ENCODE measurements at regions of chr6 and their contacts with region 1.

Region 1: GRCh38 chr6:27753668-27754407 is 158.4 kb downstream of the OR2B2 start:
- H3K4me3 ChIP-seq: peak overlapping the region; percentile 54
- H3K27ac ChIP-seq: no peak overlapping the region
- H3K4me1 ChIP-seq: no peaks in the 10 kb centered on the region
- CTCF ChIP-seq: no peak

Region 2: DNA sequence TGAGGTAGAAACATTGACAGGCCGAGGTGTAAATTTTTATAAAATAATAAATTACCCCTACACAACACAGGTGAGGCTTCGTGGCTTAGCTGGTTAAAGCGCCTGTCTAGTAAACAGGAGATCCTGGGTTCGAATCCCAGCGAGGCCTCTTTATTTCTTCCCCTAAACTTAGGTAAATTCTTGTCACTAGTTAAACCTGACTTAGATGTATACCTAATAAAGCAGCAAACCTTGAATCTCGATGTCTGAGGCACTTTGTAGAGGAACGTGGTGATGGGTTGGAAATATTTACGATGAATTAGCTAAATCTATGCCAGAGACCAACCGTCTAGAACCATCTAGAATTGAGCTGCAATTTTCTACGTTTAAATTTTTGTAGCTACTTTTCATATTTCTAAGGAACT is 27.2 kb before region 1 on chr6:
- CTCF ChIA-PET with region 1: interaction called, 10 read pairs
- POLR2A ChIA-PET with region 1: no interaction called
- H3K4me3 ChIP-seq: no peak overlapping the region
- H3K27ac ChIP-seq: no peak overlapping the region
- H3K4me1 ChIP-seq: no peaks in the 10 kb centered on the region
- CTCF ChIP-seq: no peak

Region 3: DNA sequence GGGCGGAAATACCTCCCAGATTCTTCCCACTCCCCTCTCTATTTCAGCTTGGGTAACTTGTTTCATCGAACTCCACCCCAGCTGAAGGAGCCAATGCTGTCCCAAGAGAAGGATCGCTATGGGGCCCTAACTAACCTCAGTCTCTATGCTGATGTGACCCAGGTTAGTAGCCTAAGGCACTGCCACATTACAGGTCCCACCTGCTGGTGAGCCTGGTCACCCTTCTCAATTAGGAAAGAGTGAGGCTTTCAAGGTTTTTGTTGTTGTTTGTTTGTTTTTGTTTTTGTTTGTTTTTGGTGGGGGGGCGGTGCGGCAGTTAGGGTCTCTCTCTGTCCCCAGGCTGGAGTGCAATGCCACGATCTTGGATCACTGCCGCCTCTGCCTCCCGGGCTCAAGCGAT is 10.0 kb before region 1 on chr6:
- CTCF ChIA-PET with region 1: interaction called, 19 read pairs
- POLR2A ChIA-PET with region 1: no interaction called
- H3K4me3 ChIP-seq: no peak overlapping the region
- H3K27ac ChIP-seq: no peak overlapping the region
- H3K4me1 ChIP-seq: no peaks in the 10 kb centered on the region
- CTCF ChIP-seq: no peak

Region 4: DNA sequence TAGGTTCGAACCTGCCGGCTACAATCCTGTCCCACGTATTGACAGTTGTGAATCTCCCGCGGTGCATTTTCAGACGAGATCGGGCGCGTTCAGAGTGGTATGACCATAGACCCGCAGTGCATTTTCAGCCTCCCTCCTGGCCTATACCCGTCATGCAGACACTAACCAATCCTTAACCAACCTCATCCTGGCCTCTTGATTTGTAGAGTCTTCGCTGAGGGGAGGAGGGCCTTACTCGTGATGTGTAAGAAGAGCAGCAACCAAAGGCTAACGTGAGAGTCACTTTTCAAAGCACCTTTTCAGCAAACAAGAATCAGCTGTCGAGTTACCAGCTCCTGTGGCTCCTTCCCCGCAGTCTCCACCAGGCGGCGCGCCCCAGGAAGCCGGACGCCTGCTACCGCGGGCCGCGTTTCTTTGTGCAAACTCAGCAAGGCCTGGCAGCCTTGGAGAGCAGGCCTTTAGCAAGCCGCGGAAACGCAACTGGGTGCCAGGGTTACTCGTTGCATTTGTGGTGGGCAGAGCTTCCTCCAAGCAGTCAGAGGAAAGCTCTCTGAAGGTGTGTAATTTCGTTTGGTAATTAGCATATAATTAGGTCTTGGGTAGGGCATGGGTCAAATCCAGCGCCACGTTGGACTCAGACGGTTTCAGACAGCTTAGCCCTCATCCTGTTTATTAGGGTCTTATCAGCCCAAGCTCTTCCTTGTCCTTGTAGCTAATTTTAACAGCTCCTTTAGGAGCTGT is 18.6 kb after region 1 on chr6:
- CTCF ChIA-PET with region 1: interaction called, 62 read pairs
- POLR2A ChIA-PET with region 1: interaction called, 22 read pairs
- H3K4me3 ChIP-seq: peak overlapping the region; percentile 21
- H3K27ac ChIP-seq: peak overlapping the region; percentile 40
- H3K4me1 ChIP-seq: no peaks in the 10 kb centered on the region
- CTCF ChIP-seq: peak; percentile 95

Region 5: GRCh38 chr6:27782748-27783147 is 28.9 kb after region 1 on chr6:
- CTCF ChIA-PET with region 1: no interaction called
- POLR2A ChIA-PET with region 1: no interaction called
- H3K4me3 ChIP-seq: no peak overlapping the region
- H3K27ac ChIP-seq: no peak overlapping the region
- H3K4me1 ChIP-seq: no peaks in the 10 kb centered on the region
- CTCF ChIP-seq: no peak

Region 6: DNA sequence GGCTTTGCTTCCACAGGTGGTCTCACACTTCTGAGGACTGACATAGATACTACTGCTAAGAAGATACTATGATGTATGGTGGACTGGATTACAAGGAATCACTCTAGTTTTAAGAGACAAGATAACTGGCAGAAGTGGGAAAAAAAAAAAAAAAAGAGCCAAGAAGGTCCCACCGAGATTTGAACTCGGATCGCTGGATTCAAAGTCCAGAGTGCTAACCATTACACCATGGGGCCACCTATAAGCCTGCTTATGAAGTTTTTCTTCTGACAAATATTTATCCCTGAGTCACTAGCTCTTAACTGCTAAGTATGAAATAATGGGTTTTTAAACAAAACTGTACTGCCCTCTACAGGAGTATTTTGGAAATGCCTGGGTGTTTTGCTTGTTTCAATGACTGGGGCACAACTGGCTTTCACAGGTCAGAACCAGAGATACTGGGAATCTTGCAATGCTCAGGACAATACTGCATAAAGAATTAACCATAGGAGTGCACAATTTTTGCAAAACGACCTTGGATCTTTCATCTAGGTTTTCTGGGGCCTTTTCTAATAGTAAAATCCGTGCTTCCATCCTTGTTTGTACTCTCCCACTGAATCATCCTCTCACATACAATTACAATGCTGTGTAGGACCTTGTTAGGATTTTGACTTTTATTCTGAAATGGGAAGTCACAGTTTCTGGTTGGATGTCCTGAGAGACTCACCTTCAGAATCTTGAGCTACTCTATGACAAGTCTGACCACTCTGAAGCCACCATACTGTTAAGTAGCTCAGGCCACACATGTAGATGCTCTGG is 42.1 kb after region 1 on chr6:
- CTCF ChIA-PET with region 1: interaction called, 12 read pairs
- POLR2A ChIA-PET with region 1: no interaction called
- H3K4me3 ChIP-seq: no peak overlapping the region
- H3K27ac ChIP-seq: no peak overlapping the region
- H3K4me1 ChIP-seq: no peaks in the 10 kb centered on the region
- CTCF ChIP-seq: peak; percentile 74

Measured in HEK293 (cell line).